HepG2 (cell line): ENCODE measurements at regions of chr2 and their contacts with region 1.

Region 1: DNA sequence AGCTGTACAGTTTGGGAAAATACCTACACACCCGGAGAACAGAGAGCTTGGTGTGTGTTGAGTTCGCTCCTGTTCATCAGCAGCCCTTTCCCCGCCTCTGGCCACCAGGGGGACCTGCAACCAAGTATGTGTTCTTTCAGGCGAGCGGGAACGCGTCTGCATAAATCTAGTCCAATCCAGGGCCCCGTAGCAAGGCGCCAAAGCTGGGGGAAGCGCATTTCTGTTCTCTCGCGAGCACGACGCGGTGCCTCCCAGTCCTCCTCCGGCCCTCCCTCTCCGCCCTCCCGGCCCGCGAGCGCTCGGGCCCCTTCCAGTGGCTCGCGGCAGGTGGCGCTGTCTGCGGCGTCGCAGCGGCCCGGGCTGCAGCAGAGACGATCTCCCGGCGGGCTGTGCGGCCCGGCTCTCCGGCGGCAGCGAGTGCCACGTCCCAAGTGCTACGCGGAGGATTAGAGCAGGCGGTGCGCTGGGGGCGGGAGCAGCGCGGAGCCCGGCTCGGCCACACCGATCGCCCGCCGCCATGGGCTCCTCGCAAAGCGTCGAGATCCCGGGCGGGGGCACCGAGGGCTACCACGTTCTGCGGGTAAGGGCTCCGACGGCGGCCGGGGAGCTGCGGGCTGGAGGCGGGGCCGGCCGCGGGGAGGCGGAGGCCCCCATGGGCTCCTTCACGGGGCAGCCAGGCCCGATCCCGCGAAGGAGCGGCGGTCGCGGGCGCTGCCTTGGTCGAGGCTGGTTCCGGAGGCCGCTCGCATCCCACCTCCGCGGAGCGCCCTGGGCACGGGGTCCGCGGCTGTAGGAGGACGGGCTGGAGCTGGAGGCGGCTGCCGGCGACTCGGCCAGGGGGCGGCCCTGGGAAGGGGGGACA is at the start of gene GORASP2:
- DNase-seq: peak; percentile 100
- ATAC-seq: peak; percentile 94
- H3K4me3 ChIP-seq: peak within 1 kb of the TSS; percentile 83 to 97 (median 92)
- H3K27ac ChIP-seq: peak within 1 kb of the TSS; percentile 94
- H3K4me1 ChIP-seq: peaks cover 56% of the 10 kb centered on the region
- H3K27me3 ChIP-seq: no peaks in the 10 kb centered on the region; a peak in 1 of 5 replicates
- CTCF ChIP-seq: peak; percentile 97
- EP300 ChIP-seq: peak in 1 of 2 experiments; percentile 67; a peak in 3 of 4 replicates
- POLR2A ChIP-seq: peak; percentile 79 to 90
- RAD21 ChIP-seq: peak; percentile 77
- total RNA-seq, gene GORASP2: 97.3 and 103 TPM in 2 replicates

Region 2: GRCh38 chr2:170966648-170967436 is 37.8 kb after region 1 on chr2:
- CTCF ChIA-PET with region 1: no interaction called
- POLR2A ChIA-PET with region 1: interaction called, 7 read pairs
- in situ Hi-C with region 1: no loop called
- intact Hi-C with region 1: loop called (anchors 5 kb)
- DNase-seq: peak; percentile 53
- ATAC-seq: peak; percentile 80
- H3K4me3 ChIP-seq: no peak overlapping the region
- H3K27ac ChIP-seq: no peak overlapping the region
- H3K4me1 ChIP-seq: peaks cover 22% of the 10 kb centered on the region
- H3K27me3 ChIP-seq: no peaks in the 10 kb centered on the region
- CTCF ChIP-seq: peak; percentile 36
- EP300 ChIP-seq: no peak
- POLR2A ChIP-seq: no peak
- RAD21 ChIP-seq: no peak

Region 3: GRCh38 chr2:171191021-171191420 is 262.0 kb after region 1 on chr2:
- CTCF ChIA-PET with region 1: no interaction called
- POLR2A ChIA-PET with region 1: no interaction called
- in situ Hi-C with region 1: no loop called
- intact Hi-C with region 1: no loop called
- DNase-seq: no peak
- ATAC-seq: no peak
- H3K4me3 ChIP-seq: no peak overlapping the region
- H3K27ac ChIP-seq: no peak overlapping the region
- H3K4me1 ChIP-seq: peaks cover 4% of the 10 kb centered on the region; the same call in 1 of the 2 replicates
- H3K27me3 ChIP-seq: no peaks in the 10 kb centered on the region
- CTCF ChIP-seq: no peak
- EP300 ChIP-seq: no peak
- POLR2A ChIP-seq: no peak
- RAD21 ChIP-seq: no peak

Region 4: GRCh38 chr2:171210864-171211431 is 281.9 kb after region 1 on chr2:
- CTCF ChIA-PET with region 1: no interaction called
- POLR2A ChIA-PET with region 1: no interaction called
- in situ Hi-C with region 1: no loop called
- intact Hi-C with region 1: no loop called
- DNase-seq: no peak
- ATAC-seq: peak; percentile 81
- H3K4me3 ChIP-seq: no peak overlapping the region
- H3K27ac ChIP-seq: no peak overlapping the region
- H3K4me1 ChIP-seq: 0 out of 2 replicates have a peak, but pooled peaks cover 6% of the 10 kb centered on the region
- H3K27me3 ChIP-seq: peaks cover 3 to 9% of the 10 kb centered on the region in 2 experiments; a peak in 2 of 5 replicates
- CTCF ChIP-seq: no peak
- EP300 ChIP-seq: no peak
- POLR2A ChIP-seq: no peak
- RAD21 ChIP-seq: no peak

Region 5: GRCh38 chr2:171433763-171434670 is 505.0 kb after region 1 on chr2 and contains the starts of genes DCAF17 and METTL8:
- CTCF ChIA-PET with region 1: no interaction called
- POLR2A ChIA-PET with region 1: interaction called, 13 read pairs
- in situ Hi-C with region 1: no loop called
- intact Hi-C with region 1: loop called (anchors 1 kb)
- DNase-seq: peak; percentile 97
- ATAC-seq: peak; percentile 97
- H3K4me3 ChIP-seq: peak within 1 kb of the TSS; percentile 78 to 90 (median 88)
- H3K27ac ChIP-seq: peak within 1 kb of the TSS; percentile 87
- H3K4me1 ChIP-seq: peaks cover 75% of the 10 kb centered on the region
- H3K27me3 ChIP-seq: no peaks in the 10 kb centered on the region; a peak in 1 of 5 replicates
- CTCF ChIP-seq: peak; percentile 96
- EP300 ChIP-seq: peak; percentile 17 to 63; a peak in 2 of 4 replicates
- POLR2A ChIP-seq: peak; percentile 81 to 82
- RAD21 ChIP-seq: peak; percentile 62
- total RNA-seq, gene DCAF17: 30.0 and 35.3 TPM in 2 replicates
- total RNA-seq, gene METTL8: 68.2 and 89.8 TPM in 2 replicates